Activated T-helper 1 cell treated with anti-CD3 and anti-CD28 coated beads, Interleukin-12 subunit alpha, Interleukin-12 subunit beta, Interleukin-2, Interleukin-4 antibody, amounts not matched to agents 30 ng/mL and 10 ng/mL and 1 ng/mL, durations not matched to agents 14 hours and 24 hours and 36 hours (primary cell): ENCODE measurements at regions of chr19 and their contacts with region 1.

Region 1: DNA sequence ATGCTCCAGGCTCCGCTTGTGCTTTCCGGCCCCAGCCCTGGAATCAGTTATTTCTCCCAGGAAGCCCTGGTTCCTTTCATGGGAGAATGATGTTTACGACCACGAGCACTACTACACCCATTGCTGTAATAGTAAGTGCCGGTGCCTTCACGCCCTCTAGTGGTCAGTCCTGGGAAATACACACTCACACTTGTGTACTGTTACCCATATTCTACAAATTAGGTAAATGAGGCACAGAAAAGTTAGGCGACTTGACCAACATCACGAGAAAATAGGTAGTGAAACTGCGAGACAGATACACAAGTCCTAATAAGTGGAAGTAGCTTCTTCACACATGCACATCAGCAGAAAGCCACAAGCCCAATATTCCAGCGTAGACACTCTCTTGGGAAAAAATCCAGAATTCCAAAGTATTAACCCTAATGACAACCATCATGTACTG is 21.7 kb downstream of the CEACAM21 start:
- DNase-seq: peak; percentile 59
- H3K4me3 Mint-ChIP-seq: no peak overlapping the region
- H3K27ac Mint-ChIP-seq: no peak overlapping the region
- H3K4me1 Mint-ChIP-seq: peaks cover 11% of the 10 kb centered on the region
- H3K27me3 Mint-ChIP-seq: peaks cover 24% of the 10 kb centered on the region

Region 2: DNA sequence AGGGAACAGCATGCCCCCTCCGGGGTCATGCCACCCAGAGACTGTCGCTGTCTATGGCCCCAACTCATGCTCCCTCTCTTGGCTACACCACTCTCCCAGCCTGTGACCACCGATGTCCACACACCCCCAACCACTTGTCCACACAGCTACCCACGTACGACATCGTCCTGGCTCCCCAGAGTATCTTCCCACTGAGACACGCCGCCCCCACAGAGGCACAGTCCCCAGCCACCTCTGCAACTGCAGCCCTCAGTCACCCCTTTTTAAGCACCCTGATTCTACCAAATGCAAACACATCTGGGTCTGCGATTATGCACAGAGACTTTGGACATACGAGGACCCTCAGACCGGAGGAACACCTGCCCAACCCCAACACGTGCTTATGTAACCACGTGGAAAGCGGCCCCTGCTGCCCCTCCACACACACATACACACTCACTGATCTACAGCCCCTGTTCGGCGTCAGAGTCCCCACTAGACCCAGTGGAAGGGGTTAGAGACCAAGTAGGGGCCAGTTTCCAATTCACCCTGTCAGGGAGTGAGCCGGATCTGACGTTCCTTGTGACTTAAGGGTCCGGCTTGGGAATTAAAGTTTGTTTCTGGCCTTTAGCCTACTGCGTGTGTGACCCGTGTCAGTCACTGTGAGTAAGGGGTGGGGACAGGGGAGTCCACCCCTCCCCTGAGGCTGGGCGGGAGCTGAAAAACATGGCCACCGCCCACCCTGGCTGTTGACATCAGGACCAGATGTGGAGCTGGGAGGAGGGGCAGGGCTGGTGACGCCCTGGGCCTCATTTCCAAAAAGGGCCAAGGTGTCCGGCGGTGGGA is 390.5 kb before region 1 on chr19:
- intact Hi-C with region 1: loop called (anchors 5 kb)
- DNase-seq: no peak
- H3K4me3 Mint-ChIP-seq: no peak overlapping the region
- H3K27ac Mint-ChIP-seq: no peak overlapping the region
- H3K4me1 Mint-ChIP-seq: peaks cover 18% of the 10 kb centered on the region
- H3K27me3 Mint-ChIP-seq: no peaks in the 10 kb centered on the region

Region 3: DNA sequence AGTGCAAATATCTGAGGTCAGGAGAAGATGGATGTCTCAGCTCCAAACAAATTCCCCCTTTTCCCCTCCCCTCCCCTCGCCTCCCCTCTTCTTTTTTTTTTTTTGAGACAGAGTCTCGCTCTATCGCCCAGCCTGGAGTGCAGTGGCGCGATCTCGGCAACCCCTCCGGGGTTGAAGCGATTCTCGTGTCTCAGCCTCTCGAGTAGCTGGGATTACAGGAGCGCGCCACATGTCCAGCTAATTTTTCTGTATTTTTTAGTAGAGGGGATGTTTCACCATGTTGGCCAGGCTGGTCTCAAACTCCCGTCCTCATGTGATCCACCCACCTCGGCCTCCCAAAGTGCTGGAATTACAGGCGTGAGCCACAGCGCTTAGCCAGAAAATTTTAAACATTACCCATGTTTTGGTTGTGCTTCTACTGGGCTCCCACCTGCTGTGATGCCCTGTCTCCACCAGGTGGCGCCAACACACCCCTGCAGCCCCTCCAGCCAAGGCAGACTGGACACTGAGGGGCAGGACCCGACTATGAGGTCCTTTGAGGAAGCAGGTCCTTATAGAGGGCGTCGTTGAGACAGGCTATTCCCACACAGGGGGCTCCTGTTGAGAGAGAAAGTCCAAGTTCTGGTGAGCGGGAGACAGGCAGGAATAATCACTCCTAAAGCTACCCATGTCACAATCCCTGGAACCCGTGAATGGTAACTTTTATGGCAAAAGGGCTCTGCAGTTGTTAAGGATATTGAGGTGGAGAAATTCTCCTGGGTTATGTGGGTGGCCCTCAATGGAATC is 148.3 kb before region 1 on chr19:
- intact Hi-C with region 1: loop called (anchors 1 kb)
- DNase-seq: peak; percentile 60
- H3K4me3 Mint-ChIP-seq: peak overlapping the region; percentile 81
- H3K27ac Mint-ChIP-seq: no peak overlapping the region
- H3K4me1 Mint-ChIP-seq: peaks cover 15% of the 10 kb centered on the region
- H3K27me3 Mint-ChIP-seq: peaks cover 14% of the 10 kb centered on the region

Region 4: GRCh38 chr19:41515015-41515652 is 82.5 kb before region 1 on chr19:
- intact Hi-C with region 1: loop called (anchors 1 kb)
- DNase-seq: no peak
- H3K4me3 Mint-ChIP-seq: no peak overlapping the region
- H3K27ac Mint-ChIP-seq: no peak overlapping the region
- H3K4me1 Mint-ChIP-seq: peaks cover 15% of the 10 kb centered on the region
- H3K27me3 Mint-ChIP-seq: peaks cover 17% of the 10 kb centered on the region

Region 5: DNA sequence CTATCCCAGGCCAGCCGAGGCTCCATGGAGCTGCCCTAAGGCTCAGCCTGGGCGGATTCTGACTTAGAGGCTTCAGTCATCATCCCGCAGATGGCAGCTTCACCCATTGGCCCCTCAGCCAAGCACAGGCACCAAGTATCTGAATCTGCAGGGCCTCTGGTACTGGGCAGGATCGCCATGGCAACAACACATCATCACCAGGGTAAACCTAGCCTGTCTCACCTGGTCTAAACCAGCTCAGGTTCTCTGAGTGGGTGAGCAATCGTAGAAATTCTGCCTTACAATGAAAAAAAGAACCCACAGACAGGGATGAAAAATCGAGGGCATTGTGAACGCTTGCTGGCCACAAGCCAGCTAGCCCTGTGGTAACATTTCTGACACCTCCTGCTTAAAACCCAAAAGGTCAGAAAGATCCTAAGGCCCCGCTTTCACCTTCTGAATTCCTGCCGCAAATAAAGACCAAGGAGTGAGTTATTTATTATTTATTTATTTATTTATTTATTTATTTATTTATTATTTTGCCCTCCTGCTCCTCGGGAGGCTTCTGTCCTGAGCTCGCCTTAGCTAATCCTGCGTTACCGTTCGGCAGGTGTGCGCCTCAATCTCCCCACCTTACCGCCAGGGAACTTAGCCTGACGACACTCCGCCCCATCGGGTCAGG is 33.6 kb before region 1 on chr19:
- intact Hi-C with region 1: loop called (anchors 1 kb)
- DNase-seq: no peak
- H3K4me3 Mint-ChIP-seq: peak overlapping the region; percentile 61
- H3K27ac Mint-ChIP-seq: peak overlapping the region; percentile 52
- H3K4me1 Mint-ChIP-seq: peaks cover 63% of the 10 kb centered on the region
- H3K27me3 Mint-ChIP-seq: peaks cover 2% of the 10 kb centered on the region

Region 6: DNA sequence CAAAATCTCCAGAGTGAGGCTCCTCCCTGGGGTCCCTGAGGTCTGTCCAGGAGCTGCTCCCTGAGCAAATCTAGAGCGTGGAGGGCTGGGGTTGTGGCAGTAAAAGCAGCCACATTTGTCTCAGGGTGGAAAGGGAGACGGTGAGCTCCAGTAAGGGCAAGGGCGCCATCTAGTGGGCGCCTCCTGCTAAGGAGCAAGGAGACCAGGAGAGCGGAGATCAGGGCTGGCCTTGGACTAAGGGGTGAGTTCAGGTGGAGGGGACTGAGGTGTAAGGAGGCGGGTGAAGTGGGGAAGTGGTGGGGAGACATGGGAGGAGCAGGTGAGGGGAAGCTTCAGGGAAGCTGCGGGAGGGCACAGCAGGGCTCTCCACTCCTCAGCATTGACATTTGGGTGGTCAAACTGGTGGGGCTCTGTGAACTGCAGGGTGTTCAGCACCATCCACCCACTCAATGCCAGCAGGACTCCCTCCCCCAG is 26.9 kb before region 1 on chr19:
- intact Hi-C with region 1: loop called (anchors 2 kb)
- DNase-seq: peak; percentile 76
- H3K4me3 Mint-ChIP-seq: no peak overlapping the region
- H3K27ac Mint-ChIP-seq: peak overlapping the region; percentile 27
- H3K4me1 Mint-ChIP-seq: peaks cover 27% of the 10 kb centered on the region
- H3K27me3 Mint-ChIP-seq: no peaks in the 10 kb centered on the region

Region 7: GRCh38 chr19:41575998-41576397 is 21.6 kb before region 1 on chr19 and contains the start of gene CEACAM21:
- intact Hi-C with region 1: loop called (anchors 2 kb)
- DNase-seq: peak; percentile 61
- H3K4me3 Mint-ChIP-seq: peak within 1 kb of the TSS; percentile 85
- H3K27ac Mint-ChIP-seq: peak within 1 kb of the TSS; percentile 78
- H3K4me1 Mint-ChIP-seq: peaks cover 29% of the 10 kb centered on the region
- H3K27me3 Mint-ChIP-seq: no peaks in the 10 kb centered on the region
- total RNA-seq, gene CEACAM21: 34.1 and 38.5 TPM in 2 replicates

Region 8: DNA sequence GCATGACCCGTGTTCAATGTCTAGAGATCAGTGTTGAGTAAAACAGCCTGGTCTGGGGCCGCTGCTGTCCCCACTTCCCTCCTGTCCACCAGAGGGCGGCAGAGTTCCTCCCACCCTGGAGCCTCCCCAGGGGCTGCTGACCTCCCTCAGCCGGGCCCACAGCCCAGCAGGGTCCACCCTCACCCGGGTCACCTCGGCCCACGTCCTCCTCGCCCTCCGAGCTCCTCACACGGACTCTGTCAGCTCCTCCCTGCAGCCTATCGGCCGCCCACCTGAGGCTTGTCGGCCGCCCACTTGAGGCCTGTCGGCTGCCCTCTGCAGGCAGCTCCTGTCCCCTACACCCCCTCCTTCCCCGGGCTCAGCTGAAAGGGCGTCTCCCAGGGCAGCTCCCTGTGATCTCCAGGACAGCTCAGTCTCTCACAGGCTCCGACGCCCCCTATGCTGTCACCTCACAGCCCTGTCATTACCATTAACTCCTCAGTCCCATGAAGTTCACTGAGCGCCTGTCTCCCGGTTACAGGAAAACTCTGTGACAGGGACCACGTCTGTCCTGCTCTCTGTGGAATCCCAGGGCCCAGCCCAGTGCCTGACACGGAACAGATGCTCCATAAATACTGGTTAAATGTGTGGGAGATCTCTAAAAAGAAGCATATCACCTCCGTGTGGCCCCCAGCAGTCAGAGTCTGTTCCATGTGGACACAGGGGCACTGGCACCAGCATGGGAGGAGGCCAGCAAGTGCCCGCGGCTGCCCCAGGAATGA is 109.3 kb after region 1 on chr19:
- intact Hi-C with region 1: no loop called
- DNase-seq: peak; percentile 58
- H3K4me3 Mint-ChIP-seq: no peak overlapping the region
- H3K27ac Mint-ChIP-seq: no peak overlapping the region
- H3K4me1 Mint-ChIP-seq: peaks cover 6% of the 10 kb centered on the region
- H3K27me3 Mint-ChIP-seq: peaks cover 12% of the 10 kb centered on the region